Ascending aorta (tissue), 2 donors: ENCODE measurements at regions of chr16 and their contacts with region 1.

Region 1: GRCh38 chr16:50152807-50153452 is at the start of gene TENT4B:
- DNase-seq: peak; percentile 24 to 90
- H3K4me3 ChIP-seq: peak within 1 kb of the TSS; percentile 69 to 90
- H3K27ac ChIP-seq: peak within 1 kb of the TSS; percentile 96
- H3K4me1 ChIP-seq: peaks cover 0 to 17% of the 10 kb centered on the region in 2 donors
- H3K27me3 ChIP-seq: no peaks in the 10 kb centered on the region
- CTCF ChIP-seq: no peak
- total RNA-seq, gene TENT4B: 38.1 TPM

Region 2: GRCh38 chr16:49556606-49557446 is 596.1 kb before region 1 on chr16:
- intact Hi-C with region 1: no loop called
- DNase-seq: no peak
- H3K4me3 ChIP-seq: no peak overlapping the region
- H3K27ac ChIP-seq: no peak overlapping the region
- H3K4me1 ChIP-seq: no peaks in the 10 kb centered on the region
- H3K27me3 ChIP-seq: no peaks in the 10 kb centered on the region
- CTCF ChIP-seq: peak in 2 of 3 experiments; percentile 17 to 35

Region 3: GRCh38 chr16:49827805-49828438 is 325.0 kb before region 1 on chr16:
- intact Hi-C with region 1: loop called (anchors 2 kb)
- DNase-seq: peak in 1 of 2 donors; percentile 85
- H3K4me3 ChIP-seq: peak overlapping the region in 1 of 2 donors; percentile 23
- H3K27ac ChIP-seq: peak overlapping the region; percentile 80 to 83
- H3K4me1 ChIP-seq: peaks cover 16 to 39% of the 10 kb centered on the region in 2 donors
- H3K27me3 ChIP-seq: no peaks in the 10 kb centered on the region
- CTCF ChIP-seq: no peak

Region 4: GRCh38 chr16:50065624-50066481 is 87.1 kb before region 1 on chr16 and contains the start of gene HEATR3:
- intact Hi-C with region 1: loop called (anchors 2 kb)
- DNase-seq: peak; percentile 65 to 95
- H3K4me3 ChIP-seq: peak within 1 kb of the TSS; percentile 80 to 98
- H3K27ac ChIP-seq: peak within 1 kb of the TSS; percentile 90 to 92
- H3K4me1 ChIP-seq: peaks cover 4 to 20% of the 10 kb centered on the region in 2 donors
- H3K27me3 ChIP-seq: no peaks in the 10 kb centered on the region
- CTCF ChIP-seq: no peak
- total RNA-seq, gene HEATR3: 10.4 TPM

Region 5: DNA sequence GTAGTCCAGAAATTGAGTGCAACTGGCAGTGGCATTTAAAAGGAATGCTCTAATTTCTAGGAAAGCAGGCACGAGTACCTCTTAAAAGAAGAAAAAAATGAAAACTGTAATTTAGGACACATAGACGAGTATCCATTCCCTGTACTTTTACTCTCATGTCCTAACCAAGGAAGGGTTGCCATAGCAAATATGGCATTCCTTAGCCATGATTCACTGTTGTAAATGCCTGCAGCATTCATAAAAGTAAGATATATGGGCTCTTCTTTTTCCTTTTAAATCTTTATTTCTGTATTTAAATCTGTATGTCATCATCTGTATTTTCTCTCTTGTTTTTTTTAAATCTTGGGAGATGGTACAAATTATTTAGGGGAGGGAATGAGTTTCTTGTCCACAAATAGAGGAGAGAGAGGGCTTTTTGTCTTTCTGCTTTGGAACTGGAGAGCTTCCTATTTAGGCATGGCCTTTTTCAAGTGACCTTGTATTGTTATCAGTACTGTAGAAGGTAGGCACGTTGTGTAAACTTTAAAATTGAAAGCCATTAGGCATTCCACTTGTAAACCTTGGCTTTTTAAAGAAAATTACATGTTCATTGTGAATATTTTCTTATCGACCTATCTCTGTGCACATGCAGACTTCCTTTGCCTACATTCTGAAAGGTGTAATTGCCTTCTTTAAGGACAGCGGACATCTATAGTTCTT is 50.1 kb after region 1 on chr16:
- intact Hi-C with region 1: loop called (anchors 2 kb)
- DNase-seq: no peak
- H3K4me3 ChIP-seq: peak overlapping the region; percentile 2 to 23
- H3K27ac ChIP-seq: peak overlapping the region; percentile 61
- H3K4me1 ChIP-seq: peaks cover 6 to 40% of the 10 kb centered on the region in 2 donors
- H3K27me3 ChIP-seq: no peaks in the 10 kb centered on the region
- CTCF ChIP-seq: no peak

Region 6: GRCh38 chr16:50497592-50497991 is 344.7 kb after region 1 on chr16:
- intact Hi-C with region 1: loop called (anchors 10 kb)
- DNase-seq: peak in 1 of 2 donors; percentile 86
- H3K4me3 ChIP-seq: no peak overlapping the region
- H3K27ac ChIP-seq: peak overlapping the region; percentile 83 to 86
- H3K4me1 ChIP-seq: peaks cover 0 to 38% of the 10 kb centered on the region in 2 donors
- H3K27me3 ChIP-seq: no peaks in the 10 kb centered on the region
- CTCF ChIP-seq: no peak

Region 7: DNA sequence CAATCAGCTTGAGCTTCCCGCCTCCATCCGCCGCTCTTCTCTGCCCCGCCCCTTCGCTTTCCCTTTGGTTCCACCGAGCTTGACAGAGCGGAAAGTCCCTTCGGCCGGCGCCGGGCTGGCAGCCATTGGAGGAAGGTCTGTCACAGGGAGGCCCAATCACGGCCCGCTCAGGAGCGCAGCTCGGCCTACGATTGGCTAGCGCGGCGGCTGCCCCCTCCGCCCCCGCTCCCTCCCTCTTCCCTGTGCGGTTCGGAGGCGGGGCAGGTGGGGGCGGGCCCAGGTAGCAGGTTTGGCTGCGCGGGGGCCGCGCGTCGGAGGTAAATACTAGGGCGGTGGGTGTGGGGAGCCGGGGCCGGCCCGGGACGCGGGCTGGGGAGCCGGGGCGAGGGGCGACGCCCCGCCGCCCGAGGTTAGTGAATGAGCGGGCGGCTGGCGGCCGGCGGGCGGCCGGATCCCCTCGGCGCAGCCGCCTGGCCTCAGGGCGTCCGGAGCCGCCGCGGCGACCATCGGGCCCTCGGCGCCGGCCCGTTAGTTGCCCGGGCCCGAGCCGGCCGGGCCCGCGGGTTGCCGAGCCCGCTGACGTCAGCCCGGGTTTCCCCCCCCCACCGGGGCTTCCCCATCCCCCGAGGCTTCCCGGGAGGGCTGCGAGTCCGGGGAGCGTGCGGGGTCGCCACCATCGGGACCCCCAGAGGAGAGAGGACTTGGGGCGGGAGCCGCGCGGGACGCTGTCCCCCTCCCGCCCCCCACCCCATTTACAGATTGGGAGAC is 589.1 kb after region 1 on chr16 and contains the start of gene CYLD:
- intact Hi-C with region 1: loop called (anchors 2 kb)
- DNase-seq: peak; percentile 99 to 100
- H3K4me3 ChIP-seq: peak within 1 kb of the TSS; percentile 69 to 93
- H3K27ac ChIP-seq: peak within 1 kb of the TSS; percentile 86
- H3K4me1 ChIP-seq: peaks cover 0 to 12% of the 10 kb centered on the region in 2 donors
- H3K27me3 ChIP-seq: no peaks in the 10 kb centered on the region
- CTCF ChIP-seq: no peak
- total RNA-seq, gene CYLD: 33.2 TPM